Activated B cell treated with CpG ODN at 0.5 μM for 24 hours (primary cell): ENCODE measurements at regions of chr12 and their contacts with region 1.

Region 1: DNA sequence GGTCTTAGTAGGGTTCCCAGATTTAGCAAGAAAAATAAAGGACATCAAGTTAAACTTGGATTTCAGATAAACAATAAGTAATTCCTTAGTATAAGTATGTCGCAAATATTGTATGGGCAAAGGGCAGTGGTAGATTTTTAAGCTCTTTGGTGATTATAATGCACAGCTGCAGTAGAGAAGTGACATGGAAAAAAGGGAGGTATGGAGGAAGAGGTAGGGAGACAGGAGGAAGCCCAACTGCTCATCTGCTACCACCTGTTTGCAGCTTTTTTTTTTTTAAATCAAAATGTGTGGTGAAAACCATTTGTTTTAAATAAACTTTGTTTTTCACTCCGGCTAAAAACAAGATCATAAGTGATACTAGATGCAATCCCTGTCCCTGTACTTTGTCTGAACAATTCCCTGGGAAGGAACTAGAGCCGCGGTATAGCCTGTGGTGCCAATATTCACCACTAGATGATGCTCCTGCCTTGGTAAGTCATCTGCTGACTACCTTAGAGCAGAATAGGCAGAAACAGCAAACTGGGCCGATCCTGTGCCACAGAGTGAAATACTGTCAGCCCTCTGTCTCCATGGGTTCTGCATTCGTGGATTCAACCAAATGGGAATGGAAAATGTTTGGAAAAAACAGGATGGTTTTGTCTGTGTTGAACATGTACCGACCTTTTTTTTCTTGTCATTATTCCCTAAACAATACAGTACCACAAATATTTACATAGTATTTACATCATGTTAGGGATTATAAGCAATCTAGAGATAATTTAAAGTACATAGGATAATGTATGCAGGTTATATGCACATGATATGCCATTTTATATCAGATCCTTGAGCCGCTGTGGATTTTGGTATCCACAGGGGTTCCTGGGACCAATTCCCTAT is 62.4 kb upstream of the PLBD1 start:
- DNase-seq: peak; percentile 31
- ATAC-seq: peak; percentile 100
- H3K4me3 Mint-ChIP-seq: no peak overlapping the region
- H3K27ac Mint-ChIP-seq: no peak overlapping the region
- H3K4me1 Mint-ChIP-seq: peaks cover 3% of the 10 kb centered on the region
- H3K27me3 Mint-ChIP-seq: no peaks in the 10 kb centered on the region
- CTCF ChIP-seq: peak; percentile 89

Region 2: DNA sequence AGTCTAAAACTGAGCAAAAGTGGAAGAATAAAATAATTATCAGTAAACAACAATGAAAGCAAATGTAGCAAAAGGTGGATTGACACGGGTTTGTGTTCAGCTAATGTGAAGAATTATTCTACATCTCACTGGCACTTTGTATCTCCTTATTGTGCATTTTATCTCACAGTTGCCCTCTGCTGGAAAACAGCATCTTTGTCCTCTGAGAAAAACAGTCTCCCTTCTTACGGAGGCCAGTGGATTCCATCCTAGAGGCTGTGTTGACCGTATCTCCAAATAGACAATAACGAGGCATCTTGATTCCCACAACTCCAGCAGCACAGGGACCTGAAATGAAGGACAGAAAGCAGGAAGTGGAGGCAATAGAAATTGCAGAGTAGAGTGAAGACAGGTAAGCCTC is 11.1 kb before region 1 on chr12:
- CTCF ChIA-PET with region 1: interaction called, 9 read pairs
- POLR2A ChIA-PET with region 1: no interaction called
- intact Hi-C with region 1: loop called (anchors 1 kb)
- DNase-seq: no peak
- ATAC-seq: no peak
- H3K4me3 Mint-ChIP-seq: peak overlapping the region; percentile 19
- H3K27ac Mint-ChIP-seq: peak overlapping the region; percentile 9
- H3K4me1 Mint-ChIP-seq: peaks cover 48% of the 10 kb centered on the region
- H3K27me3 Mint-ChIP-seq: no peaks in the 10 kb centered on the region
- CTCF ChIP-seq: no peak

Region 3: GRCh38 chr12:14716848-14717444 is 86.9 kb after region 1 on chr12:
- CTCF ChIA-PET with region 1: interaction called, 9 read pairs
- POLR2A ChIA-PET with region 1: no interaction called
- intact Hi-C with region 1: loop called (anchors 1 kb)
- DNase-seq: no peak
- ATAC-seq: peak; percentile 75
- H3K4me3 Mint-ChIP-seq: no peak overlapping the region
- H3K27ac Mint-ChIP-seq: no peak overlapping the region
- H3K4me1 Mint-ChIP-seq: peaks cover 2% of the 10 kb centered on the region
- H3K27me3 Mint-ChIP-seq: peaks cover 8% of the 10 kb centered on the region
- CTCF ChIP-seq: peak; percentile 15

Region 4: DNA sequence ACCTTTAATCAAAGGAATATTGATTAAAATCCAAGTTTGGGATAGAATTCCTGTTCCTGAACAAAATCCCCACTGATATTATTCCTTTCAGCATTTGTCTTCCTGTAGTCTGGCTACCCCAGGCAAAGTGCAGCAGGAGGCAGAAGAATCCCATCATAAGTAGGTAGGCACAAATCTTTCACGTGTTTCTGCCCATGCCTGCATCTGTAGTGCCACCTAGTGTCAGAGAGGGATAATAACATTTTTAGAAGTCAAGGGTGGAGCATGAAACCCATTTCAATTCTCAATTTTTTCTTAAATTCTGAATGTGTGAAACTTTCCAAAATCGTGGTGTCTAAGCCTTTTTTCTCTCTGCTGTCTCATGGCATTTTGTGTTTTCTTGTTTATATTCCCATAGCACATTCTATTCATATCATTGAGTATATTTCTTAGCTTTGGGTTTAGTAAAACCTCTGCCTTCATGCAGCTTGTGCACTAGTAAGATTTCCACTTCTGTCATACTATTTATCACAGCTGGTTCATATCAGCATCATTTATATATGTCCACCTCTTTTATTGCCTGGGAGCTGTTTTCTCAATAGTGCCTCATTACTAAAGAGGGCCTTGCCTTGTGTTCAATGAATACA is 639.0 kb after region 1 on chr12:
- CTCF ChIA-PET with region 1: no interaction called
- POLR2A ChIA-PET with region 1: no interaction called
- intact Hi-C with region 1: loop called (anchors 1 kb)
- DNase-seq: no peak
- ATAC-seq: peak; percentile 62
- H3K4me3 Mint-ChIP-seq: no peak overlapping the region
- H3K27ac Mint-ChIP-seq: no peak overlapping the region
- H3K4me1 Mint-ChIP-seq: no peaks in the 10 kb centered on the region
- H3K27me3 Mint-ChIP-seq: peaks cover 5% of the 10 kb centered on the region
- CTCF ChIP-seq: peak; percentile 76